ENCODE measurements at regions of chr22 and their contacts with region 1.

Region 1: GRCh38 chr22:42313804-42314581 is 43.5 kb upstream of the TCF20 start:
- DNase-seq: peak in 1 of 2 donors; percentile 76
- ATAC-seq: peak; percentile 60 to 68 (median 66)
- H3K4me3 ChIP-seq: no peak overlapping the region
- H3K4me3 Mint-ChIP-seq: peak overlapping the region; percentile 63
- H3K27ac ChIP-seq: no peak overlapping the region
- H3K27ac Mint-ChIP-seq: peak overlapping the region in 1 of 2 donors; percentile 73
- H3K4me1 ChIP-seq: peaks cover 45% of the 10 kb centered on the region
- H3K4me1 Mint-ChIP-seq: peaks cover 14 to 18% of the 10 kb centered on the region in 2 donors
- H3K27me3 ChIP-seq: no peaks in the 10 kb centered on the region
- H3K27me3 Mint-ChIP-seq: peaks cover 0 to 10% of the 10 kb centered on the region in 2 donors
- CTCF ChIP-seq: peak; percentile 21

Region 2: DNA sequence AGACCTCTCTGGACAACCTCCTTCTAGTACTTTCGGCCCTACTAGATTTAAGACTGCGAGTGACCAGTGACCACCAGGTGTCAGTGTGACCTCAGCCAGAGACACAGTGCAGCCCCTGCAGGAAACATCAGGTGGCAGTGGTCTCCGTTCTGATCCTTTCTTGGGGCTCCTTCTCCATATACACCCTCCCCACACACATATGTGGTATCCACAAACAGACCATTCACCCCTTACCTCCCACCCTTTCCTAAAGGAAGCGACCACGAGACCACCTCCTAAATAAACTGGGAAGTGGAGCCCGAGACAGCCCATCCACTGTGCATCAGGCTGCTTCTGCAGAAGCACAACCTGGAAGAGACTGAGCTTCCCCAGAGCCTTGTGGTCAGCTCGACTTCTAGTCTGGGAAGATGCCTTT is 144.9 kb before region 1 on chr22:
- intact Hi-C with region 1: loop called (anchors 1 kb)
- DNase-seq: peak; percentile 60 to 86
- ATAC-seq: peak; percentile 74 to 92 (median 88)
- H3K4me3 ChIP-seq: no peak overlapping the region
- H3K4me3 Mint-ChIP-seq: no peak overlapping the region
- H3K27ac ChIP-seq: no peak overlapping the region
- H3K27ac Mint-ChIP-seq: no peak overlapping the region
- H3K4me1 ChIP-seq: peaks cover 10% of the 10 kb centered on the region
- H3K4me1 Mint-ChIP-seq: peaks cover 14 to 26% of the 10 kb centered on the region in 2 donors
- H3K27me3 ChIP-seq: no peaks in the 10 kb centered on the region
- H3K27me3 Mint-ChIP-seq: no peaks in the 10 kb centered on the region
- CTCF ChIP-seq: peak; percentile 85

Region 3: GRCh38 chr22:42604403-42604802 is 290.4 kb after region 1 on chr22:
- intact Hi-C with region 1: no loop called
- DNase-seq: no peak
- ATAC-seq: no peak
- H3K4me3 ChIP-seq: no peak overlapping the region
- H3K4me3 Mint-ChIP-seq: no peak overlapping the region
- H3K27ac ChIP-seq: no peak overlapping the region
- H3K27ac Mint-ChIP-seq: peak overlapping the region in 1 of 2 donors; percentile 24
- H3K4me1 ChIP-seq: no peaks in the 10 kb centered on the region
- H3K4me1 Mint-ChIP-seq: peaks cover 19 to 32% of the 10 kb centered on the region in 2 donors
- H3K27me3 ChIP-seq: no peaks in the 10 kb centered on the region
- H3K27me3 Mint-ChIP-seq: no peaks in the 10 kb centered on the region
- CTCF ChIP-seq: no peak

Measured in natural killer cell (primary cell).